ENCODE measurements at regions of chr19 and their contacts with region 1.

Region 1: GRCh38 chr19:3108775-3109174 is 14.6 kb downstream of the GNA11 start:
- DNase-seq: peak; percentile 60 to 74 (median 66)
- H3K4me3 ChIP-seq: no peak overlapping the region
- H3K4me3 Mint-ChIP-seq: peak overlapping the region in 2 of 8 donors; percentile 1 to 54
- H3K27ac ChIP-seq: no peak overlapping the region
- H3K27ac Mint-ChIP-seq: peak overlapping the region in 1 of 7 donors; percentile 72
- H3K4me1 ChIP-seq: peaks cover 12% of the 10 kb centered on the region
- H3K4me1 Mint-ChIP-seq: peaks cover 5 to 11% (median 10%) of the 10 kb centered on the region in 4 donors
- H3K27me3 ChIP-seq: no peaks in the 10 kb centered on the region
- H3K27me3 Mint-ChIP-seq: peaks cover 0 to 2% of the 10 kb centered on the region in 2 donors

Region 2: DNA sequence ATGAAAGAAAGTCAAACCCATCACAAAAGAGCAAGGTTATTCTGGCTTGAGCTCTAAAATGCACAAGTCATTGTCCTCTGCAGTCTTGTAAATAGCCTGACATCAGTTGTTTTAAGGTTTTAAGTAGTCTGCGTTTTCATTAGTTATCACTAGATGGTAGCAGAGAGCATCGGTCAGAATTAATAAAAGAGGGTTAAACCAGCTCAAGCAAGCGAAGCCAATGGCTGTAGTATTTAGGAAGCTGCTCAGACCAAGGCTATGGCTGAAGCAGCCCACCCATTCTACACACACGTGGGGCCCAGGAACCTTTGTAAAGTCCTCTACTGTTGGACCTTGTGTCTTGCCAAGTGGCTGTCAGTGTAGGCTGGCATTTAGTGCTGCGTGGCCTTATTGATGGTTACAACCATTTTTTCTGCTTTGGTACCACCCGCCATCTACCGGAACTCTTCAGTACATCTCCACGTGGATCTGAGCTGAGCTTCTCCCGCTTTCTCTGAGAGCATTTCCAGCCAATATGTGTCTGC is 221.3 kb before region 1 on chr19:
- CTCF ChIA-PET with region 1: interaction called, 8 read pairs
- POLR2A ChIA-PET with region 1: no interaction called
- intact Hi-C with region 1: loop called (anchors 1 kb)
- DNase-seq: peak in 4 of 5 donors; percentile 20 to 38 (median 27)
- H3K4me3 ChIP-seq: no peak overlapping the region
- H3K4me3 Mint-ChIP-seq: no peak overlapping the region
- H3K27ac ChIP-seq: no peak overlapping the region
- H3K27ac Mint-ChIP-seq: peak overlapping the region in 4 of 7 donors; percentile 2 to 38 (median 32)
- H3K4me1 ChIP-seq: peaks cover 4% of the 10 kb centered on the region
- H3K4me1 Mint-ChIP-seq: peaks cover 7 to 17% (median 9%) of the 10 kb centered on the region in 4 donors
- H3K27me3 ChIP-seq: no peaks in the 10 kb centered on the region
- H3K27me3 Mint-ChIP-seq: peaks cover 0 to 7% of the 10 kb centered on the region in 2 donors

Region 3: DNA sequence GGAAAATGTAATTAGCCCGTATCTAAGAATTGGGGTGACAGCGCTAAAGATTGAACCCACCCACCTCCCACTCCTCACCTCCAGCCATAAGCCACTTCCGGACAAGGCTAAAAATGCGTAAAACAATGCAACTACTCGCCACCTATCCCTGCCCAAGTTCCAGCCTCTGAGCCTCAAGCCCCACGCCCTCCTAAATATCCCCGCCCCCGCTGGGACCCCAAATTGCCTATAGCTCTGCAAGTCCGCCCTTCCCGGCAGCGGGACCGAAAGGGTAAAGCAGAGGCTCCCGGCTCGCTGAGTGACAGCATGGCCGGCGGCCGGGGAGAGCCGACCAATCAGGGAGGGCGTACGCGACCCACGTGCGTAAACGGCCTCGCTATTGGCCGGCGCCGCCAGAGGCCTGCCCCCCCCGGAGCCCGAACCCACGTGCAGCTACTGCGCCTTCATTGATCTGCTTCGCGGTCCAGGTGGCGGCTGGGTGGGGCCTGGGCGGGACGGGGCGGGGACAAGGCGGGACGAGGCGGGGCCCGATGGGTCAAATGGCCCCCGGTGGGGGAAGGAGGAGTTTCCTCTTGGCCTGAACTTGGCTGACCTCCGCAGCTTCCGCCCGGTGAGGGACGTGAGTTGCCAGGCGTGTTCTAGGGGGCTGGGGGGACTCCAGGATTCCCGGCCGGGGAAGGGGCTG is 131.6 kb before region 1 on chr19 and contains the start of gene TLE6:
- CTCF ChIA-PET with region 1: interaction called, 10 read pairs
- POLR2A ChIA-PET with region 1: interaction called, 4 read pairs
- intact Hi-C with region 1: no loop called
- DNase-seq: peak; percentile 92 to 94 (median 93)
- H3K4me3 ChIP-seq: peak within 1 kb of the TSS; percentile 54 to 90
- H3K4me3 Mint-ChIP-seq: peak within 1 kb of the TSS; percentile 90 to 99 (median 94)
- H3K27ac ChIP-seq: peak within 1 kb of the TSS; percentile 17
- H3K27ac Mint-ChIP-seq: peak within 1 kb of the TSS; percentile 68 to 97 (median 90)
- H3K4me1 ChIP-seq: peaks cover 13% of the 10 kb centered on the region
- H3K4me1 Mint-ChIP-seq: peaks cover 6 to 19% (median 14%) of the 10 kb centered on the region in 4 donors
- H3K27me3 ChIP-seq: no peaks in the 10 kb centered on the region
- H3K27me3 Mint-ChIP-seq: peaks cover 0 to 6% of the 10 kb centered on the region in 2 donors
- total RNA-seq, gene TLE6: not detected

Region 4: GRCh38 chr19:3125900-3126524 is 17.2 kb after region 1 on chr19:
- CTCF ChIA-PET with region 1: interaction called, 13 read pairs
- POLR2A ChIA-PET with region 1: no interaction called
- intact Hi-C with region 1: no loop called
- DNase-seq: peak; percentile 41 to 71 (median 68)
- H3K4me3 ChIP-seq: no peak overlapping the region
- H3K4me3 Mint-ChIP-seq: no peak overlapping the region
- H3K27ac ChIP-seq: no peak overlapping the region
- H3K27ac Mint-ChIP-seq: peak overlapping the region in 2 of 7 donors; percentile 72 to 84
- H3K4me1 ChIP-seq: peaks cover 4% of the 10 kb centered on the region
- H3K4me1 Mint-ChIP-seq: peaks cover 5 to 7% (median 5%) of the 10 kb centered on the region in 4 donors
- H3K27me3 ChIP-seq: no peaks in the 10 kb centered on the region
- H3K27me3 Mint-ChIP-seq: no peaks in the 10 kb centered on the region

Measured in CD4-positive, alpha-beta memory T cell (primary cell).